GM10248 (cell line): ENCODE measurements at regions of chr11 and their contacts with region 1.

Region 1: DNA sequence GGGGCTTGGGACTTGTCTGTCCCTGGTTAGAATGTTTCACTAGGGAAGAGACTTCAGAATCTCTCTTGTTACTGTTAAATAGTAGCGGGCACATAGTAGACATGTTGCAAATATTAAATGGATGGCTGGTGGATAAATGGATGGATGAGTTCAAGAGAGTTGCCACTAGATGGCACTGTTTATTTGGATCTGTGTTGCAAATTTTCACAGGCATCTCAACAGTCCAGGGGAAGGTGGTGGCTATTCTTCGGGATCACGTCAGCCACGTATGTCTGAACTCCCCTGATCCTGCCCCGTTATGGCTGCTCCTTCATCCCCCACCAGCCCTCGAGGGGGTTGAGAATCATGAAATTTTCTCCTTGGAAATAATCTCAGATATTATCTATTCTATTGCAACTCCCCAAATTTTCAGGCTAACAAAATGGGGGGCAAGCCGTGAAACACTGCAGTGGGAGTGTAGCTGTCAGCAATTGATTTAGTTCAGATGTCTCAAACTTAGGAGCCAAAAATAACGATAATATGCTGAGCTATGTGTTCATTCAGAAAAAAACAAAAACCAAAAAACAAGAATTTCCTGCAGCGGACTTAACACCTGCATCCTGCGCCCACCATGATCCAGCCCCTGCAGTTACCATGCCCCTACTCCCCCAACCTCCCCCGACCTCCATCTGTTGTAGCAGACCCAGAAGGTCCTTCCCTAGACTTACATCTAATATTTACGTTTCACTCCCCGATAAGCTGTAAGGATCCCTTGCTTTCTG is 29.1 kb upstream of the BIRC3 start:
- DNase-seq: peak; percentile 80
- CTCF ChIP-seq: peak; percentile 70

Region 2: DNA sequence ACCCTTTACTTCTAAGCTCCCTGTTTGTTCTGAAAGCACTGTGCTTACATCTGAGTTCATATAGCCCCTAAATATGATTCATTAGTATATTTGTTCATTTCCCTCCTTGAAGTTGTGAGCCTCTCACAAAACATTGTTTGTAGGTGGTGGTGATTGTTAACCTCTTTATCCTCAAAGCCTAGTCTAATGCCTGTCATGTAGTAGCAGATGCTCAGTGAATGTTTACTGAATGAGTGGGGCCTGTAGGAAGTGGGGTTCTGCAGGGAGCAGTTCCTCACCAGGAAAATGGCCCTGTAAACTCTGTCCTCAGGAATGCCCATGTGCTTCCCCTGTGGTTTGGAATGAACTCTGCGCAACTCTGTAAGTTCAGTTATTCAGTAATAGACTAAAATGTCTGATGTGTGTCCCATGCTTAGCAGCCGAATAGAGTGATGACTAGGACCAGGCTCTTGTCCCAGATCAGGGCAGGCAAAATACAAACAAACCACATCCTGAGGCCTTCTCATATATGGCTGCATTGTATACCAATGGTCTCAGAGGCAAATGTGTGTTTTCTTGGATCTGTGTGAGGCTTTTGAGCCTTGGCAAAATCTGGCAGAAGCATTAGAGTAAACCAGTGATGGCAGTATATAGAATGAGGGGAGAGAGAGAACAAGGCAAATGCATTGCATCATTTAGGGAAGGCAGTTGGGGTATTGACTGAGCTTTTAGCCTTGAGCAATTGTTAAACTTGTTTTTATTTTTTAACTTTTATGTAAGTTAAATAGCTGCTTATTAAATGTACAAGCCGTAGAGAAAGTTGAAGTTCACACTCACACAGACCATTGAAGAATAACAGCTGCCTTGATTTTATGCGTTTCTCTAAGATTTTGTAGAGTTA is 62.2 kb before region 1 on chr11:
- CTCF ChIA-PET with region 1: no interaction called
- POLR2A ChIA-PET with region 1: no interaction called
- DNase-seq: no peak
- CTCF ChIP-seq: no peak

Region 3: GRCh38 chr11:102254045-102254444 is 34.1 kb before region 1 on chr11:
- CTCF ChIA-PET with region 1: no interaction called
- POLR2A ChIA-PET with region 1: no interaction called
- DNase-seq: no peak
- CTCF ChIP-seq: peak; percentile 27

Region 4: GRCh38 chr11:102268329-102269193 is 19.6 kb before region 1 on chr11:
- CTCF ChIA-PET with region 1: interaction called, 26 read pairs
- POLR2A ChIA-PET with region 1: no interaction called
- DNase-seq: peak; percentile 91
- CTCF ChIP-seq: peak; percentile 51

Region 5: GRCh38 chr11:102306048-102306585 is 18.0 kb after region 1 on chr11:
- CTCF ChIA-PET with region 1: interaction called, 90 read pairs
- POLR2A ChIA-PET with region 1: no interaction called
- DNase-seq: no peak
- CTCF ChIP-seq: no peak

Region 6: GRCh38 chr11:102317099-102317767 is 29.1 kb after region 1 on chr11 and contains the start of gene BIRC3:
- CTCF ChIA-PET with region 1: interaction called, 90 read pairs
- POLR2A ChIA-PET with region 1: interaction called, 6 read pairs
- DNase-seq: peak; percentile 84
- CTCF ChIP-seq: peak; percentile 8

Region 7: DNA sequence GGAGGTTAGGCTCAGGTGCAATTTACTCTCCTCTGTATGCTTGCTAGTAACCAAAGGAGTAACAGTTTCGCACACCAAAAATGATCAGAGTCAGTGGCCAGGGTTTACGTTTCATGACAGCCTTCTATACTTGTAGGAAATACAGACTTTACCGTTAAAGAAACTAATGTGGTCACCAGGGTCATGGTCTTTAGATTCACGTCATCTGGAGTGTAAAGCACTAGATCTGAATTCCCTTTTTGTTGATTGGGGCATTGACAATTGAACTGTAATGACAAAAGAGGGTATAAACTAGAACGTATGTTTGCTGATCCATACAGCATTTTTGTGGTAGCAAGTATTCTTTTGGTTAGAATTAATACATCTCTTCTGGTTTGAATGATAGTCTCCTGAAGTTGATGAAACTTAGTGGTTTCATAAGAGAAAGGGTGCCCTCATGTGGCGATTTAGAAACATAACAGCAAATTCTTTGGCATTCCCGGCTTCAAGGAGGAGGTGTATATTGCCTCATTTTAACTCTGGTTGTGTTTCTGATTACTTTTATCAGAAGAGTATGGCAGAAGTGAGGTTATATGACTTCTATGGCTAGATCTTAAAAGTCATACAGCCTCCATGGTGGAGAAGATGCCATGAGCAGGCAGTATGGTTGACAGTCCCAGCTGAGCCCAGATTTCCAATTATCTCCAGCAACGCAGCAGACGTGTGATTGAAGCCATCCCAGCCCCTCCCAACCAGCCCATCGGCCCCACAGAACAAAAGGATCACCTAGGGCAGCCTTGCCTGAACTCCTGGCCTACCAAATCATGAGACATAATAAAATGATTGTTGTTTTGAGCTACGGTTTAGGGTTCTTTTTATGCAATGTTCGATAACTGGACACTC is 207.3 kb after region 1 on chr11:
- CTCF ChIA-PET with region 1: interaction called, 12 read pairs
- POLR2A ChIA-PET with region 1: no interaction called
- DNase-seq: peak; percentile 58
- CTCF ChIP-seq: peak; percentile 68

Region 8: GRCh38 chr11:102666331-102666957 is 378.3 kb after region 1 on chr11:
- CTCF ChIA-PET with region 1: interaction called, 71 read pairs
- POLR2A ChIA-PET with region 1: no interaction called
- DNase-seq: peak; percentile 50
- CTCF ChIP-seq: peak; percentile 85